Vagina (tissue), 2 donors: ENCODE measurements at regions of chr4 and their contacts with region 1.

Region 1: DNA sequence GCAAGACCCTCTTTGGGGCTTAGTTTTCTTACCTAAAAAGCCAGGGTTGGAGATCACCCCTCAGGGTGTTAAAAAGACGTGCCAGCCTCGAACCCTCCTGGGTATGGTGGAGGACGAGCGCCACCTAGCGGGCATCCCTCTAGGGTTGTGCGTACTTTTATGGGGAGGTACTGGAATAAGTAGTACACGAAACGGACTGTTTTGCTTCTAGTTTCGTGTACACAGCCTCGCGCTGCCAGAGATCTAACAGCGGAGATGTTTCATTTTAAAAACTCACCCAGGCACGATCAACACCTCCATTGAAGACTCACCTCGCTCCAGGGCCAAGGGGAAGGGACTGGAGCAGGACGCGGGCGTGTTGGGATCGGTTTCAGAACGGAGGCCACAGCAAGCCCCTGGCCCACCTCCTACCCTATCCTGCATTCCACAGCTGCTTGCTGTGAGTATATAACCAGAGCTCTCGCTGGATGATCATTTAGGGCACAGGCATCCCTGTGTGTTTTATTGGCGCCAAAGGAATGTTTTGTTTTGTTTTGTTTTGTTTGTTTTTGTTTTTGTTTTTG is 4.8 kb upstream of the NKX3-2 start:
- DNase-seq: no peak
- H3K4me3 ChIP-seq: peak overlapping the region in 1 of 2 donors; percentile 9
- H3K27ac ChIP-seq: no peak overlapping the region
- H3K4me1 ChIP-seq: peaks cover 27% of the 10 kb centered on the region
- H3K27me3 ChIP-seq: peaks cover 23% of the 10 kb centered on the region
- CTCF ChIP-seq: peak; percentile 43 to 97 (median 85)
- POLR2A ChIP-seq: no peak

Region 2: GRCh38 chr4:12852338-12853307 is 696.4 kb before region 1 on chr4:
- intact Hi-C with region 1: loop called (anchors 5 kb)
- DNase-seq: no peak
- H3K4me3 ChIP-seq: no peak overlapping the region
- H3K27ac ChIP-seq: no peak overlapping the region
- H3K4me1 ChIP-seq: no peaks in the 10 kb centered on the region
- H3K27me3 ChIP-seq: no peaks in the 10 kb centered on the region
- CTCF ChIP-seq: peak; percentile 11 to 70 (median 14)
- POLR2A ChIP-seq: no peak

Region 3: GRCh38 chr4:13484122-13484748 is 64.8 kb before region 1 on chr4 and contains the start of gene RAB28:
- intact Hi-C with region 1: loop called (anchors 2 kb)
- DNase-seq: peak; percentile 93 to 96
- H3K4me3 ChIP-seq: peak within 1 kb of the TSS; percentile 90 to 91
- H3K27ac ChIP-seq: peak within 1 kb of the TSS; percentile 93
- H3K4me1 ChIP-seq: peaks cover 17% of the 10 kb centered on the region
- H3K27me3 ChIP-seq: no peaks in the 10 kb centered on the region
- CTCF ChIP-seq: no peak
- POLR2A ChIP-seq: peak in 1 of 2 donors; percentile 73
- total RNA-seq, gene RAB28: 182 TPM

Region 4: DNA sequence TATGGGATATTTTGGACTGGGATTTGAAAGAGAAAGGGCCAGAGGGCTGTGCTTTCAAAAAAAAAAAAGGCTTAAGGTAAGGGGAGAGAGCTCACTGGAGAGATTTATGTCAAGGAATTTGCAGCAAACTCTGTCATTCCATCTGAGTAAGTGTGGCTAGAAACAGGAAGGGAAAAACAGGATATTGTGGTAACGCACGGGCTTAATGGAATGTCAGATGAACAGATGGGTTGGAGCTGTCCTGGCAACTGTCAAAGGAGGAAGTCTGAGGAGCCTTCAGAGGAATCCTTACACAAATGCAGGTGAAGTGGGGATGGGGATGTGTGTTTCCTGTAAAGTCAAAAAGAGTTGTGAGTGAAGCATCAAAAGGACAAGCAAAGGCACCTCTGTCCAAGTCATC is 10.3 kb after region 1 on chr4:
- intact Hi-C with region 1: no loop called
- DNase-seq: no peak
- H3K4me3 ChIP-seq: no peak overlapping the region
- H3K27ac ChIP-seq: no peak overlapping the region
- H3K4me1 ChIP-seq: no peaks in the 10 kb centered on the region
- H3K27me3 ChIP-seq: no peaks in the 10 kb centered on the region
- CTCF ChIP-seq: no peak
- POLR2A ChIP-seq: no peak